Astrocyte of the cerebellum (primary cell): ENCODE measurements at regions of chr6 and their contacts with region 1.

Region 1: DNA sequence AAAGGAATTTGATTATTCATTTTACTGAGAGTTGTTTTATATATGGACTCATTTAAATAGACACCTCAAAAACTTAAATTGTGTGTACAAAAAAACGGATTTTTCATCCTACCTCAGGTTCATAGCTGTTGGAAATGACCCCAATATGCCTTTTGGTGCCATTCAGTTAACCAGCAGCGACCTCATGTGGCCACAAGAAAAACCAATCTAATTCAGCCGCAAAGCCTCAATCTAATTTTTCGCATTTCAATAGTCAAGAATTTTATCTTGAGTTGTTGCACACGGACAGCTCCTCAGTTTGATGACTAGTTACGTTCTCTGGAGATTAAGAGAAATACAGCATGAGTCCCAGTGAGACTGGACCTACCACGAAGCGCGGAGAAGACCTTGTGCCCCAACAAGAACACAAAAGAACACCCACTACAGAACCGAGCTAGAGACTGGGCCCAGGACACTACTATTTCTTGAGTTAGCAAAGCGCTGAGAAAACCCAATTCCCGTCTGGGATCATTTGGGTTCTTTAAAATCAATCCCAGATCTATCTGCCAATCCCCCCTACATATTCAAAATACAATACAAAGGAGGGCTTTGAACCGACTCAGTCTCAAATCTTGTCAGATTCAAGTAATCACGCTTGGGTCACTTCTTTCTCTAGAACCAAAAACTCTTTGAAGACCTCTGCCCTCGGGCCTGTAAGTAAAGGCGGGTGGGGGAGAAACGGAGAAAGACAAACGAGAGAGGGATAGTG is 1.1 kb downstream of the TCP11 start:
- DNase-seq: peak; percentile 63
- H3K4me3 ChIP-seq: no peak overlapping the region
- CTCF ChIP-seq: peak; percentile 73

Region 2: DNA sequence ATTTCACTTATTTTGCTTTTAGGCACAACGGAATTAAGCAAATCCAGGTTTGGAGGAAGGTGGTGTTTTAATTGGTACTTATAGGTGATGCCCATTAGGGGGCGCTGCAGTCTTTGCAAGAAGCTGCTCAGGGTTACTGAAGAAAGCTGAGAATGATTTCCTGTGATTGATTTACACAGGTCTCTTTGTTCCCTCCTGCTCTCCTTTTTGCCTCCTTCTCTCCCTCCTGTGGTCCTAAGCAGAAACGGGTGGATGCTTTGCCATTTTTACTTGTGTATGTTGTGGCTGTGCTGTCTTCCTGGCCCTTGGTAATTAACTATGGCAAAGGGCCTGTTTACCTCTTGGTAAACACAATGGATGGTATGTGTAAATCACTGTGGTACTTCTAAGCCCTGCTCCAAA is 153.2 kb before region 1 on chr6:
- in situ Hi-C with region 1: loop called (anchors 25 kb)
- DNase-seq: peak; percentile 80
- H3K4me3 ChIP-seq: no peak overlapping the region
- CTCF ChIP-seq: peak; percentile 77

Region 3: DNA sequence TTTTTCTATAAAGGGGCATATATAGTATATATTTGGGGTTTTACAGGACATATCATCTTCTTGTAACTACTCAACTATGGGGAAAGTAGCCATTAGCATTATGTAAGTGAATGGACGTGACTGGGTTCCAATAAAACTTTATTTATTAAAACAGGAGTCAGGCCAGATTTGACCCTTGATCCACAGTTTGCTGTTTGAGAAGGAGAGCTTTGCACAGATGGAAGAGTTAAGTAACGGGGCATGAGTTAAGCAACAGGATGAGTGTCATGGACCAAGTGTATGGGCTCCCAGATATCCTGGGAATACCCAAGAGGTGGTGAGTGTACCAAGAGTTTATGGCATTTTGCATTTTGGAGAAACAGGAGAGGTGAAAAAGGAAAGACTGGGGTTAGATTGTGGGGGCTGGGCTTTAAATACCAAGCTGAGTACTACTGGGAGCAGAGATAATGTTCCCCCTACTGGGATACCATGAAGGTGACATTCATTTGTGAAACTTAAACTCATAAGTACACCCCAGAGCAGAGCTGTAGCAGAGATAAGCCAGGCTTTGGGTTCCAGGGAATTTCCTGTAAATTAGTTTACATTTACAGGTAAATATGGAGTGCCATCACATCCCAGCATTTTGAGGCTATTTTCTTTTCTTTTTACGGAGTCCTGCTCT is 55.2 kb after region 1 on chr6:
- in situ Hi-C with region 1: loop called (anchors 10 kb)
- DNase-seq: no peak
- H3K4me3 ChIP-seq: no peak overlapping the region
- CTCF ChIP-seq: no peak